Motor neuron (in vitro differentiated cells): ENCODE measurements at regions of chr17 and their contacts with region 1.

Region 1: DNA sequence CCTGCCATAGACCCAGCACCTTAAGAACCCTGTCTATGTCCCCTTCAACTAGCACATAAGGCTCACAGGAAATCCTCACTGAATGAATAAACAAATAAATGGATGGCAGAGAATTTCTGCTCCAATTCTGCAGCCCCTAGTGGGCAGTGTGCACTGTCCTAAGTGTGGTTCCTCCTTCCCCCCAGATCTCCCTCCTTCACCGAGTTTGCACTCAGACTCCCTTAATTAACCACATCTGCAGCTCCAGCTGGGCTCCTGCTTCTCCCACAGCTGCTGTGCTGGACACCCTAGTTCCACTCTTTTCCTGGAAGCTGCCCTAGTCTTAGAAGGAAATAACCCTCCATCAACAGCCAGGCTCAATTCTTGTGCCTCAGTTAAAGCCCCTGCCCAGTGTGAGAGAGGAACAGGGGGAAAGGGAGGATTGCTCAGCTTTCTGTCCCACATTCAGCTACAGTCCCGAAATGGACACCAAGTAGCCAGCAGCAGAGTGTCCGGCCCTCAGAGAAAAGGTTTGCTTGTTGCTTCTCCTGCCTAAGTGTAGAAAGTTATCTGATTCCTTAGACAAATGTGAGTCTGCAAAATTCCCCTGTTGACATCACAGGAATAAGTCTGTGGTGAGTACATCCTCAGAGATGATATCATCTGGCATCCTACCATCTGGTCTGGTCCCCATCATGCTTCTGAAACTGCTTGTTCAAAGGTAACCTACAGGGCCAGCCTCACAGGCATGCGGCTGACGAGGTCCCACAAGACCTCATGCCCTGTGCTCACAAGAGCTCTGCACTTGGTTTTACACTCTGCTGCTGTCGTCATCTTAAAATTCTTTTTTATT is 12.3 kb downstream of the LRRC3C start:
- ATAC-seq: peak; percentile 52 to 94 (median 76)
- H3K4me3 ChIP-seq: no peak overlapping the region
- H3K27ac ChIP-seq: no peak overlapping the region
- H3K4me1 ChIP-seq: peaks cover 6 to 7% of the 10 kb centered on the region in 2 donors

Region 2: GRCh38 chr17:39894681-39895376 is 45.0 kb before region 1 on chr17:
- in situ Hi-C with region 1: loop called in 1 of 9 experiments (anchors 10 kb)
- ATAC-seq: no peak
- H3K4me3 ChIP-seq: no peak overlapping the region
- H3K27ac ChIP-seq: no peak overlapping the region
- H3K4me1 ChIP-seq: no peaks in the 10 kb centered on the region